Activated B cell treated with CpG ODN at 0.5 μM for 24 hours (primary cell): ENCODE measurements at regions of chr19 and their contacts with region 1.

Region 1: DNA sequence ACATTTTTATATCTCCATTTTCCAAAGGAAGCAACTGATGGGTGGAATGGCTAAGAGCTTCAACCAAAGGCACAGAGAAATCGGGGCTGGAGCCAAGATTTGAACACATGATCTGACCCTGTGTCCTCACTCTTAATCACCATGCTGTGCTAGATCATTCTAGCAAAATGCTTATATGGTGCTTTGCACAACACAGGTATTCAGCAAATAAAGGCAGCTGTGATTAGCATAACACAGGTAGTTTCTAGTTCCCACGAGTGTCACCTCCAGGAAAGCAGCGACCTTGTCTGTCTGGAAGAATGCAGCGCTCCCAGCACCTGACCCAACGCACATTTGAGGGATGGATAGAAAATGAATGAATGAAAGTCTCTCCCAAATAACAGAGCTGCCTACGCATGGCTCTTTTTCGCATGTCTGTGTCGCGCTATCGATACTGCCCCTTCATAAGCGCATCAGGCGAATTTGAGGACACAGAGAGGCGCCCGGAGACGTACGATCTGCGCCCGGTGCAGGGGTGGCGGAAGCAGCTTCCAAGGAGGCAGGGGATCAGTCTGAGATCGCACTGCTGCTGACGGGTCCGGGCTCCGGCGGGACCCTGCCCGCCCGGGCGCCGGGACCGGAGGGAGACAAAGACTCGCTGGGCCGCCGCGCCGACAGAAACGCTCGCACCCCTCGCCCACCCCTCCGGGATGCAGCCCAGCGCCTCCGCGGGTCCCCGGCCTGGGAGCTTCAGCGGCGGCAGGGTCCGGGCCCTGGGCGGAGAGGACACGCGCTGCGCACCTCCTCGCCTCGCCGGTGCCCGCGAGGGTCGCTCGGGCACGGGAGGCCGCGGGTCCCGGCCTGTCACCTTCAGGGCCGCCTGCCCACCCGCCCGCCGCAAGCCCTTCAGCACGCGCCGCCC is 609 bp downstream of the EPS15L1 start:
- DNase-seq: peak; percentile 37
- ATAC-seq: peak; percentile 2
- H3K4me3 Mint-ChIP-seq: peak overlapping the region; percentile 86
- H3K27ac Mint-ChIP-seq: peak overlapping the region; percentile 7
- H3K4me1 Mint-ChIP-seq: peaks cover 43% of the 10 kb centered on the region
- H3K27me3 Mint-ChIP-seq: no peaks in the 10 kb centered on the region
- CTCF ChIP-seq: no peak

Region 2: DNA sequence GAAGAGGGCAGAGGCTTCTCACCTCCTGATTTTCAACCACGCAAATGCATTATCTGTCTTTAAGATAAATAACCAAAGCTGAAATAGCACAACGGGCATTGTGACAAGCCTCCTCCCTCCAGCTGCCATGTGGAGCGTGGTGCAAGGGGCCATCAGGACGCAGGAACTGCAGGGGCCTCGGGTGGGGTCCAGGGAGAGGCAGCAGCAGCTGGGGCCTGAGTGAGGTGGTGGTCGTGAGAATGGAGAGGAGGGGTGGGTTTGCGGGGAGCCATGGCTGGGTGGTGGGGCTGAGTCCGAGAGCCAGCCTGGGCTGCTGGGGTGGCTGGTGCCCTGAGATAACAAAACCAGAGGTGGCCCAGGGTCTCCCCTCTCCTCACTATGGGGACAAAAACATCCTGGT is 65.4 kb before region 1 on chr19:
- CTCF ChIA-PET with region 1: no interaction called
- POLR2A ChIA-PET with region 1: no interaction called
- intact Hi-C with region 1: no loop called
- DNase-seq: no peak
- ATAC-seq: no peak
- H3K4me3 Mint-ChIP-seq: no peak overlapping the region
- H3K27ac Mint-ChIP-seq: no peak overlapping the region
- H3K4me1 Mint-ChIP-seq: peaks cover 28% of the 10 kb centered on the region
- H3K27me3 Mint-ChIP-seq: no peaks in the 10 kb centered on the region
- CTCF ChIP-seq: no peak

Region 3: GRCh38 chr19:16435238-16435917 is 35.8 kb before region 1 on chr19:
- CTCF ChIA-PET with region 1: no interaction called
- POLR2A ChIA-PET with region 1: no interaction called
- intact Hi-C with region 1: loop called (anchors 5 kb)
- DNase-seq: no peak
- ATAC-seq: no peak
- H3K4me3 Mint-ChIP-seq: no peak overlapping the region
- H3K27ac Mint-ChIP-seq: peak overlapping the region; percentile 70
- H3K4me1 Mint-ChIP-seq: peaks cover 35% of the 10 kb centered on the region
- H3K27me3 Mint-ChIP-seq: no peaks in the 10 kb centered on the region
- CTCF ChIP-seq: no peak

Region 4: DNA sequence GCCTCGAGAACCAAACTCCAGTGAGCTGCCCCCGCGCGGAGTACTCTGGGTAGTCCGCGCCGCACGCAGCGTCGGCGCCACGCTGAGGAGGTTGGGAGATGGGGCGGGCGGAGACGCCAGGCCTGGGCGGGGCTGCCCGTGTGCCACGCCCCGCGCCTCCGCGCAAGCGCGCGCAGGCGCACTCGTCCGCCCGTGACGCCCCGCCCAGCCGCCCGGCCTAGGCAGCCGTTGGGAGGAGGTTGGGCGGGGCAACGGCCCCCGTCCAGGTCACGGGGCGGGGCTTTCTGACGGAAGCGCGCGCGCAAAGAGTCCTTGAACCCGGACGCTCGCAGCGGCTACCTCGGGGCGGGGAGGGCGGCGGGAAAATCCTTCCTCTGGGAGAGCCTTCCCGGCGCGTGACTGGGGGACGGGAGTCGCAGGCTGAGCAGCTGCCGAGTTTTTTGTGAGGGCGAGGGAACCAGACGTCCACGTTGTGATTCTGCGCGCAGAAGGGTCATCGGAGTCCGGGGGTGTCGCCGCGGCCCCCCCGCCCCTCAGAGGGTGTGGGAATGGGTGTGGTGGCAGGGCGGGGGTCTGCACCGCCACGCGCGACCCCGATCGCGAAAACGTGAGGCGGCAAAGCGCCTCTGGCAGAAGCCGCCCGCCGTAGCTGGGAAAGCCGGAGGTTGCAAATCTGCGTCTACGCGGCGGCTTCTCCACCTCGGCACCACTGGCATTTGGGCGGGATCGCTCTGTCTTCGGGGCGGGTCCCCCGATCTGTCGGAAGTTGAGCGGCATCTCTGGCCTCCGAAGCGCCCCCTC is 157.2 kb after region 1 on chr19 and contains the start of gene MED26:
- CTCF ChIA-PET with region 1: no interaction called
- POLR2A ChIA-PET with region 1: no interaction called
- intact Hi-C with region 1: no loop called
- DNase-seq: peak; percentile 93
- ATAC-seq: peak; percentile 94
- H3K4me3 Mint-ChIP-seq: peak within 1 kb of the TSS; percentile 98
- H3K27ac Mint-ChIP-seq: peak within 1 kb of the TSS; percentile 94
- H3K4me1 Mint-ChIP-seq: peaks cover 51% of the 10 kb centered on the region
- H3K27me3 Mint-ChIP-seq: no peaks in the 10 kb centered on the region
- CTCF ChIP-seq: no peak
- total RNA-seq, gene MED26: 32.0 and 36.1 TPM in 2 replicates